ENCODE measurements at regions of chr2 and their contacts with region 1.

Region 1: GRCh38 chr2:144937910-144938709 is 418.2 kb upstream of the ZEB2 start:
- DNase-seq: peak; percentile 87

Region 2: GRCh38 chr2:144516981-144517865 is 420.9 kb before region 1 on chr2:
- in situ Hi-C with region 1: loop called (anchors 25 kb)
- DNase-seq: peak; percentile 77

Region 3: GRCh38 chr2:144812288-144812687 is 125.8 kb before region 1 on chr2:
- in situ Hi-C with region 1: no loop called
- DNase-seq: no peak

Region 4: GRCh38 chr2:145026456-145027455 is 88.6 kb after region 1 on chr2:
- in situ Hi-C with region 1: loop called (anchors 5 kb)
- DNase-seq: peak; percentile 95

Region 5: DNA sequence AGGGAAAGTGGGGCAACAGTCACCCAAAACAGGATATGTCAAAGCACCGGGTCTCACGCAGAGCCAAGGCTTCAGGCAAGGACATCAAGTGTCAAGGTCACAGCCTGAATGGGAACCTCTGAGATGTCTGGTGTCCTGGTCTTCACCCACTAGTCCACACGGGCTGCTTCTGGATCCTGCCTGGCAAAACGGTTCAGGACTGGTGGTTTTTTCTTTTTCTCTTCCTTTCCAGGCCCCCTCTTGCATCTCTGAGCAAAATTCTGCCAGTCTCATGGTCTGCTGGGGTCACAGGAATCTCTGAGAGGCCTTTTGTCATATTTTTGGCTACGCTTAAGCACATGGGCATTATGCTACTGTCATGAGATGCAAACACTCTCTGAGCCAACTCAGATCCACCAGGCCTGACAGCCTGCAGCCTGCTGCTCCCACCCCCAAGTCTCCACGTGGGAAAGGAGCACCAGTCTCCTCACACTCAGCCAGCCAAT is 100.0 kb after region 1 on chr2:
- in situ Hi-C with region 1: no loop called
- DNase-seq: peak; percentile 99

Measured in SK-MEL-5 (cell line).